ENCODE measurements at regions of chr1 and their contacts with region 1.

Region 1: GRCh38 chr1:37692078-37692833 is at the start of gene CDCA8:
- DNase-seq: peak; percentile 98
- H3K4me3 ChIP-seq: peak within 1 kb of the TSS; percentile 85 to 86
- H3K4me3 Mint-ChIP-seq: peak within 1 kb of the TSS; percentile 92 to 97 (median 96)
- H3K27ac ChIP-seq: peak within 1 kb of the TSS; percentile 67
- H3K27ac Mint-ChIP-seq: peak within 1 kb of the TSS; percentile 87 to 97 (median 95)
- H3K4me1 ChIP-seq: peaks cover 32% of the 10 kb centered on the region
- H3K4me1 Mint-ChIP-seq: peaks cover 21 to 45% (median 35%) of the 10 kb centered on the region in 4 donors
- H3K27me3 ChIP-seq: no peaks in the 10 kb centered on the region
- H3K27me3 Mint-ChIP-seq: no peaks in the 10 kb centered on the region
- total RNA-seq, gene CDCA8: 0.61 to 1.3 TPM

Region 2: DNA sequence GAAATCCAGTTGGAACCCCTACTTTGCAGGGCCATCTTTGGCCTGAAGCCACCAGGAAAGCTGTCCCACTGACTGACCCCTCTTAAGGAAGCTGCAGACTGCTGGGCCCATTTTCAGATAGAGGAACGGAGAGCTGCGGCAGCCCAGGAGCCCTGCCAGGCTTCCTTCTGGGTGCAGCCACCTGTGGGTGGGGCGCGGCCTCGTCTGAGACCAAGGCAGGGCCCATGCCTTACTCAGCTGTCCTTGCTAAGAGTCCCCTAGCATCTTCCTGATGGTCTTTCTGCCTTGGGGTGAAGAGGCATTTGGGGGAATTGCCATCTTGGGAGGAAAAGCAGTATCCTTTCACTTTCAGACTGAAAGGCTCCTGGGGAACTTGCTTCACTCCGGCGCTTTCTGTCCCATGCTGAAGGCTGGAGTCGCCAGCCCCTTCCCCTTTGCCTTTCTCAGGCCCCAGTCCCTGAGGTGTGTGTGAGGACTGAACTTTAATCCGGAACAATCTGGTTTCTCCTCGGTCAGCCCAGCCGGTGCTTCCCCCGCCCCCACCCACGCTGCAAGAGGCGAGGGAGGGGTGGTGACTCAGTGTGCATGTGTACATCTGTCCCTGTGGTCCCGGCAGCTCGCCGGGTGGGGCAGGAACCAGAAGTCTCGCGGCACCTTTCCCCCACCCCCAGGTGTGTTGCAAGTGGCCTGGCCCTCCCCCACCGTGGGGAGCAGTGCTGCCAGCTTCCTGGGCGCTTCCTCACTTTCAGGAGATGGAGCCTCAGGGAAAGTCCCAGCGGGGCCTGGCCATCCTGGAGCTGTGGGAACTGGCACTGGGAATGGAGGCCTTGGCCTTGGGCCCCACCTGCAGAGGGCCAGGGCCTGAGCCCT is 212.8 kb before region 1 on chr1:
- CTCF ChIA-PET with region 1: interaction called, 11 read pairs
- POLR2A ChIA-PET with region 1: interaction called, 31 read pairs
- intact Hi-C with region 1: loop called (anchors 2 kb)
- DNase-seq: peak; percentile 82 to 97 (median 84)
- H3K4me3 ChIP-seq: peak overlapping the region; percentile 85 to 96
- H3K4me3 Mint-ChIP-seq: peak overlapping the region; percentile 95 to 99 (median 97)
- H3K27ac ChIP-seq: peak overlapping the region; percentile 96
- H3K27ac Mint-ChIP-seq: peak overlapping the region; percentile 97 to 100 (median 99)
- H3K4me1 ChIP-seq: peaks cover 39% of the 10 kb centered on the region
- H3K4me1 Mint-ChIP-seq: peaks cover 15 to 62% (median 32%) of the 10 kb centered on the region in 4 donors
- H3K27me3 ChIP-seq: no peaks in the 10 kb centered on the region
- H3K27me3 Mint-ChIP-seq: no peaks in the 10 kb centered on the region

Region 3: GRCh38 chr1:37595440-37596319 is 96.6 kb before region 1 on chr1 and contains the start of gene GNL2:
- CTCF ChIA-PET with region 1: interaction called, 228 read pairs
- POLR2A ChIA-PET with region 1: interaction called, 21 read pairs
- intact Hi-C with region 1: loop called (anchors 1 kb)
- DNase-seq: peak; percentile 95
- H3K4me3 ChIP-seq: peak within 1 kb of the TSS; percentile 74 to 86
- H3K4me3 Mint-ChIP-seq: peak within 1 kb of the TSS; percentile 98 to 99 (median 99)
- H3K27ac ChIP-seq: peak within 1 kb of the TSS; percentile 89
- H3K27ac Mint-ChIP-seq: peak within 1 kb of the TSS; percentile 99 to 100 (median 99)
- H3K4me1 ChIP-seq: peaks cover 17% of the 10 kb centered on the region
- H3K4me1 Mint-ChIP-seq: peaks cover 18 to 36% (median 26%) of the 10 kb centered on the region in 4 donors
- H3K27me3 ChIP-seq: no peaks in the 10 kb centered on the region
- H3K27me3 Mint-ChIP-seq: no peaks in the 10 kb centered on the region
- total RNA-seq, gene GNL2: 33.9 to 37.1 TPM

Region 4: DNA sequence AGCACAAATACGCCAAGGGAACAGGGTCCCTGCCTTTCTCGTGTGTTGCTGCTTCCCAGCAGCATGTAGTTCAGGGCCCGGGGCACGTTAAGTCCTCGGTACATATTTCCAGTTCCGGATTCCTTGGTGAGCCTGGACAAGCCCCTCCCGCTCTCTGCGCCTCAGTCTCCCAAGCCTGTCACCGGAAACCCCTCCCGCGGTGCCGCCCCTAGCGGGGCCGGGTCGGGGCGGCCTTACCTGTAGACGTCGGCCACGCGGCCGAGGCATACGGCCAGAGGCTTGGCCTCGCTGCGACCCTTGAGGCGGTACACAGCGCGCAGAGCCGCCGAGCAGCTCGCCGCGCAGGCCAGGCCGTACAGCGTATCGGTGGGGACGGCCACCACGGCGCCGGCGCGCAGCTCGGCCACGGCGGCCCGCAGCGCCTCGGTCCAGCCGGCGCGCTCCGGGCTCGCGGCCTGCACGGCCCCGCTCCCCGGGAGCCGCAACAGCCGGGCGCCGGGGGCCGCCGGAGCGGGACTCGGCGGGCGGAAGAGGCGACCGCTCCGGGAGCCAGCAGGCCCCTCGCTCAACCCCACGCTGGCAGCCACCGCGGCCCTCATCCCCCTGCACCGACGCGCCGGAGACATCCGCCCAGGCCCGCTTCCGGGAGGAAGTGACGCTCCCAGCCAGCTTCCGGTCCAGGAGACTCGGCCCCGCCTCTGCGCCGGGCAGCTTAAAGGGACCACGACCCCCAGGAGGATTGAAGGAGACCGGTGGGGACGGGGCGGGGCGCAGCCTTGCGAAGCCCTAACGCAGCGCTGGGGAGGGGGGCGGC is 115.5 kb after region 1 on chr1 and contains the starts of genes C1orf122 and YRDC:
- CTCF ChIA-PET with region 1: interaction called, 5 read pairs
- POLR2A ChIA-PET with region 1: interaction called, 11 read pairs
- intact Hi-C with region 1: no loop called
- DNase-seq: peak; percentile 86 to 93 (median 88)
- H3K4me3 ChIP-seq: peak within 1 kb of the TSS; percentile 56 to 83
- H3K4me3 Mint-ChIP-seq: peak within 1 kb of the TSS; percentile 92 to 98 (median 96)
- H3K27ac ChIP-seq: peak within 1 kb of the TSS; percentile 89
- H3K27ac Mint-ChIP-seq: peak within 1 kb of the TSS; percentile 93 to 99 (median 98)
- H3K4me1 ChIP-seq: peaks cover 40% of the 10 kb centered on the region
- H3K4me1 Mint-ChIP-seq: peaks cover 13 to 57% (median 32%) of the 10 kb centered on the region in 4 donors
- H3K27me3 ChIP-seq: no peaks in the 10 kb centered on the region
- H3K27me3 Mint-ChIP-seq: no peaks in the 10 kb centered on the region
- total RNA-seq, gene C1orf122: 12.4 to 13.9 TPM
- total RNA-seq, gene YRDC: 13.8 to 14.1 TPM

Region 5: DNA sequence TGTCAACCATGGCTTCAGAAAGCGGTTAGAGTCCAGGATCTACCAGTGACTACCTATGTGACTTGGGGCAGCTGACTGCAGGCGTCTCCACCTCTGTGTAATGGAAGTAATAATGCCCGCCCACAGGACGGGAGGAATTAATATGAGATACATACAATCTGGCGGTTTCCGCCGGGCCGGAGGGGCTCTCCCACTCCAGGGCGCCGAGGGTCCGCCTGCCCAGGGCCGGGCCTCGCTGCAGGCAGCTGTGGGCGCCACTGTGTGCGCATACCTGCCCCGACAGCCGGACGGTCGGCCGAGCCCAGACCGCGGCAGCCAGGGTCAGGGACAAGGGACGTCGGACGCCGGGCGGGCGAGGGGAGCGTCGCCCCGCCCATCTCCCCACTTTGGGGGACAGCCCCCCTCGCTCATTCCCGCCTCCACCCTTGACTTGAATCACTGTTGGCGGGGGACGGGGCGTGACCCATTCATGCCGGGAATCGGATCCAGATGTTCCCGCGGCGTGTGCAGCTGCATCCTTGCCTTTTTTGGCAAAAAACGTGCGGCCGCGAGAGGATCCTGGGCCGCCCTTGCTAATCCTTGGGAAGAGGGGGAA is 303.6 kb after region 1 on chr1:
- CTCF ChIA-PET with region 1: no interaction called
- POLR2A ChIA-PET with region 1: no interaction called
- intact Hi-C with region 1: loop called (anchors 5 kb)
- DNase-seq: no peak
- H3K4me3 ChIP-seq: no peak overlapping the region
- H3K4me3 Mint-ChIP-seq: peak overlapping the region in 7 of 8 donors; percentile 64 to 86 (median 79)
- H3K27ac ChIP-seq: peak overlapping the region; percentile 44
- H3K27ac Mint-ChIP-seq: peak overlapping the region in 4 of 7 donors; percentile 22 to 95 (median 64)
- H3K4me1 ChIP-seq: peaks cover 9% of the 10 kb centered on the region
- H3K4me1 Mint-ChIP-seq: peaks cover 8 to 30% (median 14%) of the 10 kb centered on the region in 4 donors
- H3K27me3 ChIP-seq: no peaks in the 10 kb centered on the region
- H3K27me3 Mint-ChIP-seq: no peaks in the 10 kb centered on the region